ENCODE measurements at regions of chr4 and their contacts with region 1.

Region 1: GRCh38 chr4:100106982-100107381 is 83.3 kb downstream of the DDIT4L start:
- DNase-seq: no peak
- ATAC-seq: no peak
- H3K4me3 ChIP-seq: no peak overlapping the region
- H3K27ac ChIP-seq: no peak overlapping the region
- H3K4me1 ChIP-seq: no peaks in the 10 kb centered on the region
- H3K27me3 ChIP-seq: peaks cover 2% of the 10 kb centered on the region; the same call in 1 of the 2 replicates
- CTCF ChIP-seq: no peak
- POLR2A ChIP-seq: no peak
- RAD21 ChIP-seq: no peak

Region 2: DNA sequence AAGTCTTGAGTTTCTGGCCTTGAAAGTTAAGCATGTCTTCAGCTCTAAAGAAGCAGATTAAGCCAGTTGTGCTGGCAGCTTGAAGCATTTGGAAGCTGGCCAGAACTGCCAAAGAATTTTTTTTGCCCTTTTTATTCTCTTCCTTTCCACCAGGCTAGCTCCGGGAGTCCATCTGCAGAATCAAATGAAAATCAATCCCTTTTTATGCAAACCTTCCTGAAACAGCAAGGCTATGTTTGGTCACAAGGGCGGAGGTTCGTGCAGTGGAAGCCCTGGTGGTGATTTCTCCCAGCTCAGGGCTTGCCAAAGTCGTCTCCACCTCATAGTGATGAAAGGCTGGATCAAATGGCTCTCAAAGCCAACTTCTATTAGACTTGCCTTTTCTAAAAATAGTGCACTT is 427.8 kb before region 1 on chr4:
- CTCF ChIA-PET with region 1: no interaction called
- POLR2A ChIA-PET with region 1: no interaction called
- dilution Hi-C with region 1: no loop called
- in situ Hi-C with region 1: no loop called
- intact Hi-C with region 1: no loop called
- DNase-seq: no peak
- ATAC-seq: no peak
- H3K4me3 ChIP-seq: no peak overlapping the region
- H3K27ac ChIP-seq: no peak overlapping the region
- H3K4me1 ChIP-seq: no peaks in the 10 kb centered on the region
- H3K27me3 ChIP-seq: peaks cover 2% of the 10 kb centered on the region; the same call in 1 of the 2 replicates
- CTCF ChIP-seq: no peak
- POLR2A ChIP-seq: no peak
- RAD21 ChIP-seq: no peak

Region 3: GRCh38 chr4:99698541-99698940 is 408.4 kb before region 1 on chr4:
- CTCF ChIA-PET with region 1: no interaction called
- POLR2A ChIA-PET with region 1: no interaction called
- dilution Hi-C with region 1: no loop called
- in situ Hi-C with region 1: no loop called
- intact Hi-C with region 1: no loop called
- DNase-seq: no peak
- ATAC-seq: no peak
- H3K4me3 ChIP-seq: no peak overlapping the region
- H3K27ac ChIP-seq: no peak overlapping the region
- H3K4me1 ChIP-seq: no peaks in the 10 kb centered on the region
- H3K27me3 ChIP-seq: peaks cover 2% of the 10 kb centered on the region; the same call in 1 of the 2 replicates
- CTCF ChIP-seq: no peak
- POLR2A ChIP-seq: no peak
- RAD21 ChIP-seq: no peak

Region 4: GRCh38 chr4:100348472-100348871 is 241.5 kb after region 1 on chr4:
- CTCF ChIA-PET with region 1: no interaction called
- POLR2A ChIA-PET with region 1: interaction called, 14 read pairs
- dilution Hi-C with region 1: no loop called
- in situ Hi-C with region 1: no loop called
- intact Hi-C with region 1: no loop called
- DNase-seq: peak; percentile 88
- ATAC-seq: peak; percentile 92
- H3K4me3 ChIP-seq: no peak overlapping the region
- H3K27ac ChIP-seq: no peak overlapping the region
- H3K4me1 ChIP-seq: peaks cover 2% of the 10 kb centered on the region
- H3K27me3 ChIP-seq: no peaks in the 10 kb centered on the region
- CTCF ChIP-seq: no peak
- POLR2A ChIP-seq: no peak
- RAD21 ChIP-seq: no peak

Region 5: DNA sequence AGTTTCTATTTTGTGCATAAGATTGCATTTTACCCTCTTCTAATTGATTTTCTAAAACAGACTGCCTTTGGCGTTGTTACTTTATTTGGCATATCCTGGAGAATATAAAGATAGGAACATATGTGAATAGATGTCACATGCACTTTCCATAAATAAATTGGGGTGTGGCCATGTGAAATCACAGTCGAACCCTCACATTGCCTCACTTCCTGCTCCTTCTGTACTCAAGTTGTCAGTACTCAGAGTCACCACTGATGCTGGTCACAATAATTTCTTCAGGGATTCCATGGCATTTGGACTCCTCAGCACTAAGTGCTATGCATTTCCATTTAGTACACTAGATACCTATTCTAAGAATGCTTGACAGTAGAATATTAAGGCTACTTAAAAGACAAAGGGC is 412.2 kb after region 1 on chr4:
- CTCF ChIA-PET with region 1: no interaction called
- POLR2A ChIA-PET with region 1: no interaction called
- dilution Hi-C with region 1: no loop called
- in situ Hi-C with region 1: no loop called
- intact Hi-C with region 1: no loop called
- DNase-seq: no peak
- ATAC-seq: no peak
- H3K4me3 ChIP-seq: no peak overlapping the region
- H3K27ac ChIP-seq: no peak overlapping the region
- H3K4me1 ChIP-seq: no peaks in the 10 kb centered on the region
- H3K27me3 ChIP-seq: no peaks in the 10 kb centered on the region
- CTCF ChIP-seq: no peak
- POLR2A ChIP-seq: no peak
- RAD21 ChIP-seq: no peak

Measured in IMR-90 (cell line).